ENCODE measurements at regions of chr7 and their contacts with region 1.

Region 1: GRCh38 chr7:92245487-92246362 is at the starts of genes ANKIB1 and KRIT1:
- DNase-seq: peak; percentile 96
- H3K4me3 Mint-ChIP-seq: peak within 1 kb of the TSS; percentile 98
- H3K27ac Mint-ChIP-seq: peak within 1 kb of the TSS; percentile 99
- H3K4me1 Mint-ChIP-seq: peaks cover 32% of the 10 kb centered on the region
- H3K27me3 Mint-ChIP-seq: no peaks in the 10 kb centered on the region
- total RNA-seq, gene ANKIB1: 54.3 and 55.7 TPM in 2 replicates
- total RNA-seq, gene KRIT1: 47.3 and 49.2 TPM in 2 replicates

Region 2: GRCh38 chr7:91565499-91566401 is 680.0 kb before region 1 on chr7:
- intact Hi-C with region 1: no loop called
- DNase-seq: no peak
- H3K4me3 Mint-ChIP-seq: no peak overlapping the region
- H3K27ac Mint-ChIP-seq: no peak overlapping the region
- H3K4me1 Mint-ChIP-seq: peaks cover 2% of the 10 kb centered on the region
- H3K27me3 Mint-ChIP-seq: no peaks in the 10 kb centered on the region

Region 3: GRCh38 chr7:91880413-91881241 is 365.1 kb before region 1 on chr7 and contains the start of gene MTERF1:
- intact Hi-C with region 1: loop called (anchors 5 kb)
- DNase-seq: peak; percentile 97
- H3K4me3 Mint-ChIP-seq: peak within 1 kb of the TSS; percentile 90
- H3K27ac Mint-ChIP-seq: peak within 1 kb of the TSS; percentile 90
- H3K4me1 Mint-ChIP-seq: peaks cover 27% of the 10 kb centered on the region
- H3K27me3 Mint-ChIP-seq: no peaks in the 10 kb centered on the region
- total RNA-seq, gene MTERF1: 19.5 and 20.9 TPM in 2 replicates

Region 4: DNA sequence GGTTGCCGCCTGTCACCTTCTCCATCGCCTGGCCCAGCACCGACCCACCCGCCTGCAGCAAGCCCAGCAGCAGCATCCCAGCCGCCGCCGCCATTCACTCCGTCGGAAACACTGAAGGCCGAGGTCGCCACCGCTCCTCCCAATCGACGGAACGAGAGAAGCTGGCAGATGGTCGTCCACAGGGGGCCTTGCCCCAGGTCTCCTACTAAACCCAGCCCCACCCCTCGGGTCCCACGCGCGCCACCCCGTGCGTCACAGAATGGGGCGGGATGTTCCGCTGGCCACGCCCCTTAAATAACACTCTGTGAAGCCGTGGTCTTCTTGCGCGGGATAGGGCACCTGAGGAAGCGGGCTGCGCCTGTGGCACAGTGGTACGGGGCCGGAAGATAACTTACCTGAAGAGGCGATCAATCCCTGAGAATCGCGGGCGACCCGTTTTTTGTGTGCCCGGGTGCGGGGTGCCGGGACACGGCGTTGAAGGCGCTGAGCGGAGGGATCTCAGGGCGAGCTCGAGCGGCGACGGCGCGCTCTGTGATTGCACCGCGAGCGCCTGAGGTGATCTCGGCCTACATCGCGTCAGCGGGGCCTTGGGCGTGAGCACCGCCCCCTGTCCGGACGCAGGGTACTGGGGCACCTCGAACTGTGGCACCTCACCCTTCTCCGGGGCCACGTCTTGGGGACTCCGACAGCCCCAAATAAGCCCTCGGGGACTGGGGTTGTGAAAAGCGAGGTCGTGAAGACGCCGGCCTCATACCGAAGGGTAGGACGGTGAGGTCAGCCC is 111.3 kb before region 1 on chr7 and contains the start of gene CYP51A1:
- intact Hi-C with region 1: loop called (anchors 1 kb)
- DNase-seq: peak; percentile 99
- H3K4me3 Mint-ChIP-seq: peak within 1 kb of the TSS; percentile 95
- H3K27ac Mint-ChIP-seq: peak within 1 kb of the TSS; percentile 100
- H3K4me1 Mint-ChIP-seq: peaks cover 40% of the 10 kb centered on the region
- H3K27me3 Mint-ChIP-seq: no peaks in the 10 kb centered on the region
- total RNA-seq, gene CYP51A1: 103 and 106 TPM in 2 replicates

Region 5: GRCh38 chr7:92336662-92337340 is 91.1 kb after region 1 on chr7:
- intact Hi-C with region 1: loop called (anchors 10 kb)
- DNase-seq: no peak
- H3K4me3 Mint-ChIP-seq: no peak overlapping the region
- H3K27ac Mint-ChIP-seq: no peak overlapping the region
- H3K4me1 Mint-ChIP-seq: no peaks in the 10 kb centered on the region
- H3K27me3 Mint-ChIP-seq: no peaks in the 10 kb centered on the region

Region 6: DNA sequence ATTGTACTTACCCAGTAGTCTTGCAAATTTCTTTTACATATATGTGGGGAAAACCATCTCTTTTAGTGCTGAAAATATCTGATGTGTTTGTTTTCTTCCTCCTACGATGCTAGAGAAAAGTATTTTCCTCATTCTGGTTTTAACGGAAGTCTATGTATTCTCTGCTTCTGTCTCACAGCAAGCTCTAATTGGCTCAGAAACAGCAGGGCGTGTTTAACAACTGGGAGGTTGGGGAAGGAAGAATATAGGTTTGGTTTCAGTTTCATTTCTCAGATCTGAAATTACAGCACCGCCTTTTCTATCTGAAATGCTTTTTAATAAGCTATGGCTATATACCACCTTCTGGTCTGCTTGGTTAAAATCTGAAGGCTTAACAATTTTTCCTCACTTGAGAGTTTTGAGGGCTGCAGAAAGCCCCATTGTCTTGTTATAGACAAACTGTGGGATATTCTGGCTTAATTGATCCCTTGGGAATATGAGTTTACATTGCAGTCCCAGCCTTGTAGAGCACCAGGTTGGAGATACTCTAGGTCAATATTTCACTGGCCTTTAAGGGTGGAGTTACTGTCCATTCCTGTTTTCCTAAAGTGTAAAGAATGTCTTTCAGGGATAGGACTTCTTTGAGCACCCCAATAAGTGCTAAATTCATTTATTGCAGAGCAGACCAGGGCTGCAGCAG is 872.3 kb after region 1 on chr7 and contains the start of gene SAMD9:
- intact Hi-C with region 1: loop called (anchors 5 kb)
- DNase-seq: peak; percentile 90
- H3K4me3 Mint-ChIP-seq: peak within 1 kb of the TSS; percentile 90
- H3K27ac Mint-ChIP-seq: peak within 1 kb of the TSS; percentile 90
- H3K4me1 Mint-ChIP-seq: peaks cover 54% of the 10 kb centered on the region
- H3K27me3 Mint-ChIP-seq: no peaks in the 10 kb centered on the region
- total RNA-seq, gene SAMD9: 8.6 and 9.4 TPM in 2 replicates